Heart right ventricle (tissue), 16 donors: ENCODE measurements at regions of chr9 and their contacts with region 1.

Region 1: DNA sequence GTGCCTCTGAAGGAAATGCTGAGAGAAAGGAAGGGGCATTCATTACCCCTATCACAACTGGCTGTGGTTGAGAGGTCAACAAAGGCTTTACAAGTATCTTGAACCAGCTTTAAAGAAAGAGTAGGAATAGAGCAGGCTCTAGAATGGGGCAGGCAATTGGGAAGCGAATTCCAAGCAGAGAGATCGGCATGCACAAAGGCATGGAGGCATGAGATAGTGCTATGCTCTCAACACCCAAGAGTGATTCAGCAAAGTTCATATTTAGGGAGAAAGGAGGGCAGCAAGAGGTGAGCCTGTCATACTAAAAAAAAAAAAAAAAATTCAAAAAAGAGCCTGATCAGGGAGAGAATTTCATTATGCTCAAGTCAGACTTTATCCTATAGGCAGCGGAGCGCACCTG is 187.5 kb downstream of the ALDH1A1 start:
- DNase-seq: no peak
- ATAC-seq: no peak
- H3K4me3 ChIP-seq: no peak overlapping the region
- H3K27ac ChIP-seq: no peak overlapping the region
- H3K4me1 ChIP-seq: no peaks in the 10 kb centered on the region
- H3K27me3 ChIP-seq: peaks cover 0 to 8% (median 0%) of the 10 kb centered on the region in 7 donors
- CTCF ChIP-seq: no peak

Region 2: GRCh38 chr9:72718503-72718902 is 46.8 kb before region 1 on chr9:
- intact Hi-C with region 1: no loop called
- DNase-seq: no peak
- ATAC-seq: no peak
- H3K4me3 ChIP-seq: no peak overlapping the region
- H3K27ac ChIP-seq: no peak overlapping the region
- H3K4me1 ChIP-seq: no peaks in the 10 kb centered on the region
- H3K27me3 ChIP-seq: no peaks in the 10 kb centered on the region
- CTCF ChIP-seq: no peak

Region 3: DNA sequence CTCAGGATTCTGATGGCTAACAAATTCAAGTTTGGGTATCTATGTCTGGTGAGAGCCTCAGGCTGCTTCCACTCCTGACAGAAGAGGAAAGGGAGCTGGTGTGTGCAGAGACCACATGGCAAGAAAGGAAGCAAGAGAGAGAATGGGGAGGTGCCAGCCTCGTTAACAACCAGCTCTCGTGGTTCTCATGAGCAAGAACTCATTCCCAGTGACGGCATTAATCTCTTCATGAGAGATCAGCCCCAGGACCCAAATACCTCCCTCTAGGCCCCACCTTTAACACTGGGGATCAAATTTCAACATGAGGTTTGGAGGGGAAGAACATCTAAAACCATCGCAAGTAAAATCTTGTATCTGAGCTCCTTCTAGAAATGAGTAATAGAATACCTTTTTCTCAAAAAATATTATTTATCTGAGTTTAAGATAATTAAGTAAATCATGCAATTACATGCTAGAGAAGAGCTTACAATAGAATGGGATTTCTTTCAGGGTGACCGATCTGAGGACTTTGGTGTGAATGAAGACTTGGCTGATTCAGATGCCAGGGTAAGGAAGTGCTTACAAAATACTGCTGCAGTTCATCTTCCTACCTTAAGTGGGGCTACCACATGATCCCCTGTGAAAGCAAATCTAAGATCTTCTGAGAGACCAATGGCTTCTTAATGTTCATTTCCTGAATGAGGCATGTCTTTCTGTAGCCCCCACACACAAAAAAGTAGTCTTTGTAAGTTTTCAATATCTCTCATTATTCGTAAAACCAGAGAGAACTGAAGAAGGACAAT is 397.8 kb after region 1 on chr9:
- intact Hi-C with region 1: no loop called
- DNase-seq: no peak
- ATAC-seq: no peak
- H3K4me3 ChIP-seq: no peak overlapping the region
- H3K27ac ChIP-seq: no peak overlapping the region
- H3K4me1 ChIP-seq: peaks cover 0 to 10% (median 2%) of the 10 kb centered on the region in 9 donors
- H3K27me3 ChIP-seq: no peaks in the 10 kb centered on the region
- CTCF ChIP-seq: no peak

Region 4: GRCh38 chr9:73219985-73220626 is 454.8 kb after region 1 on chr9:
- intact Hi-C with region 1: loop called in 1 of 10 experiments (anchors 5 kb)
- DNase-seq: no peak
- ATAC-seq: peak in 3 of 8 donors; percentile 41 to 85 (median 65)
- H3K4me3 ChIP-seq: no peak overlapping the region
- H3K27ac ChIP-seq: peak overlapping the region in 1 of 10 donors; percentile 54
- H3K4me1 ChIP-seq: peaks cover 0 to 21% (median 0%) of the 10 kb centered on the region in 9 donors
- H3K27me3 ChIP-seq: peaks cover 0 to 35% (median 4%) of the 10 kb centered on the region in 7 donors
- CTCF ChIP-seq: no peak